ENCODE measurements at regions of chr15 and their contacts with region 1.

Region 1: DNA sequence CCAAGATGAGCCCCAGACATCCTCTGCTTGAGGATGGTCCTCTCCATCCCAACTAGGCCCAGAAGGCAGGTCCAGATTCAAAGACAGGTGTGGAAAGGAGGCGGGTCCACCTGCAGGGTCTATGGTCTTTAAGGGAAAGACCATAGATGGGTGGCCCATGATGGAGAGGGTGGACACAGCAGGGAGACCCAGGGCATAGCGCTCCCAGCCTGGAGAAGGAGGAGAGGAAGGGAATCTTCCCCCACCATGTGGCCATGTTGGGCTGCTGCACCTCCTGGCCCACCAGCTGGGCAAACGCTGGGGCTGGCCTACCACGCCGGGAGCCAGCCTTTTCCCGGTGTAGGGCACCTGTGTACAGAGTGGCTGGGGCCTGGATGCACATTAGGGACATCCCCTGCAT is 265.2 kb upstream of the TLE3 start:
- DNase-seq: peak; percentile 54 to 63
- H3K4me3 ChIP-seq: no peak overlapping the region
- H3K4me3 Mint-ChIP-seq: no peak overlapping the region
- H3K27ac Mint-ChIP-seq: no peak overlapping the region
- H3K4me1 ChIP-seq: no peaks in the 10 kb centered on the region; the same call in 1 of the 2 replicates
- H3K4me1 Mint-ChIP-seq: peaks cover 5% of the 10 kb centered on the region
- H3K27me3 ChIP-seq: no peaks in the 10 kb centered on the region
- H3K27me3 Mint-ChIP-seq: no peaks in the 10 kb centered on the region
- CTCF ChIP-seq: peak; percentile 71 to 75

Region 2: DNA sequence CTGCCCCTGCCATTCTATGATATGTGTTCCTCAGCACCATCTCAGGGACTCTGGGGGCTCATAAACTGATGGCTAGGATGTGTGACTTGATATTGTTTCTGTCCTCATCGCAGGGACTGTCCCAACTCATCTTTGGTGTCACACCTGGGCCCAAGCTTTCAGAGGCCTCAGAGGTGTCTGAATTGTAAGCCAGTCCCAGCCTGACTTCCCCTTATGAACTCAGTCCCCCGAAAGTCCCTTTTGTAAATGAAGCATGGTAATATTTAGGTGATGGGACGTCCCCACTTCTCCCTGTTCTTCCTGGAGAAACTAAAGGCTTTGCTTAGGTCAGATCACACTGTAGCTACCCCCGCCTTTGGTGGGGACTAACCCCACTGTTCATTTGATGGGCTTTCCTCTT is 122.8 kb before region 1 on chr15:
- CTCF ChIA-PET with region 1: no interaction called
- POLR2A ChIA-PET with region 1: no interaction called
- intact Hi-C with region 1: loop called (anchors 5 kb)
- DNase-seq: no peak
- H3K4me3 ChIP-seq: no peak overlapping the region
- H3K4me3 Mint-ChIP-seq: no peak overlapping the region
- H3K27ac Mint-ChIP-seq: no peak overlapping the region
- H3K4me1 ChIP-seq: peaks cover 5% of the 10 kb centered on the region; the same call in 1 of the 2 replicates
- H3K4me1 Mint-ChIP-seq: peaks cover 8% of the 10 kb centered on the region
- H3K27me3 ChIP-seq: no peaks in the 10 kb centered on the region
- H3K27me3 Mint-ChIP-seq: no peaks in the 10 kb centered on the region
- CTCF ChIP-seq: no peak

Region 3: DNA sequence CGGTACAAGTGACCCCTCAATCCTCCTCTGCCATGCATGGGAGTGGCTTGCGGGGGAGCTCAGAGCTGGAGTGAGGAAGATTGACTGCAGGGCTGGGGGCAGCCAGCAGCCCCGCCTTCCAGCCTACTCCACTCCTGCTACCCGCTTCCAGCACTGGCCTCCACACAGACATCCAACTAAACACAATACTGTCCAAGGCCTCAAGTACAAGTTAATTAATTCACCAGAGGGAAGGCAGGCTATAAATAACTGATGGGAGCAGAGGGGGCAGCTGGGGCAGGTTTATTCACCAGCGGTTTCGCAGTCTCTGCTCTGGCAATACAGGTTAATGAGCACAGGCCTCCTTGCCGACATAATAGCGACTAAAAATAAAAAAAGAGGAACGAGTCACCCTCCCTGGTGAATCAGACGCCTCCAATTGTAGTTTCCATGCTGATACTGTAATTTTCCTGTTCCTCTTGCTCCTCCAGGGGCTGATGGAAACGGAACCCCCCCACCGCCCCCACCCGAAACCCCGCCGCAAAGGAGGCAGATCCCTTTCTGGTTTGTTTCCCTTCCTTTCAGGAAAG is 98.8 kb before region 1 on chr15:
- CTCF ChIA-PET with region 1: interaction called, 3 read pairs
- POLR2A ChIA-PET with region 1: no interaction called
- intact Hi-C with region 1: loop called (anchors 5 kb)
- DNase-seq: no peak
- H3K4me3 ChIP-seq: no peak overlapping the region
- H3K4me3 Mint-ChIP-seq: no peak overlapping the region
- H3K27ac Mint-ChIP-seq: no peak overlapping the region
- H3K4me1 ChIP-seq: peaks cover 2% of the 10 kb centered on the region; the same call in 1 of the 2 replicates
- H3K4me1 Mint-ChIP-seq: no peaks in the 10 kb centered on the region
- H3K27me3 ChIP-seq: no peaks in the 10 kb centered on the region
- H3K27me3 Mint-ChIP-seq: no peaks in the 10 kb centered on the region
- CTCF ChIP-seq: no peak

Region 4: GRCh38 chr15:70466895-70467529 is 104.1 kb after region 1 on chr15:
- CTCF ChIA-PET with region 1: interaction called, 19 read pairs
- POLR2A ChIA-PET with region 1: no interaction called
- intact Hi-C with region 1: loop called (anchors 1 kb)
- DNase-seq: peak; percentile 60 to 64
- H3K4me3 ChIP-seq: no peak overlapping the region
- H3K4me3 Mint-ChIP-seq: no peak overlapping the region
- H3K27ac Mint-ChIP-seq: no peak overlapping the region
- H3K4me1 ChIP-seq: no peaks in the 10 kb centered on the region
- H3K4me1 Mint-ChIP-seq: peaks cover 8% of the 10 kb centered on the region
- H3K27me3 ChIP-seq: no peaks in the 10 kb centered on the region
- H3K27me3 Mint-ChIP-seq: no peaks in the 10 kb centered on the region
- CTCF ChIP-seq: peak; percentile 48 to 86